HEK293 (cell line): ENCODE measurements at regions of chr1 and their contacts with region 1.

Region 1: DNA sequence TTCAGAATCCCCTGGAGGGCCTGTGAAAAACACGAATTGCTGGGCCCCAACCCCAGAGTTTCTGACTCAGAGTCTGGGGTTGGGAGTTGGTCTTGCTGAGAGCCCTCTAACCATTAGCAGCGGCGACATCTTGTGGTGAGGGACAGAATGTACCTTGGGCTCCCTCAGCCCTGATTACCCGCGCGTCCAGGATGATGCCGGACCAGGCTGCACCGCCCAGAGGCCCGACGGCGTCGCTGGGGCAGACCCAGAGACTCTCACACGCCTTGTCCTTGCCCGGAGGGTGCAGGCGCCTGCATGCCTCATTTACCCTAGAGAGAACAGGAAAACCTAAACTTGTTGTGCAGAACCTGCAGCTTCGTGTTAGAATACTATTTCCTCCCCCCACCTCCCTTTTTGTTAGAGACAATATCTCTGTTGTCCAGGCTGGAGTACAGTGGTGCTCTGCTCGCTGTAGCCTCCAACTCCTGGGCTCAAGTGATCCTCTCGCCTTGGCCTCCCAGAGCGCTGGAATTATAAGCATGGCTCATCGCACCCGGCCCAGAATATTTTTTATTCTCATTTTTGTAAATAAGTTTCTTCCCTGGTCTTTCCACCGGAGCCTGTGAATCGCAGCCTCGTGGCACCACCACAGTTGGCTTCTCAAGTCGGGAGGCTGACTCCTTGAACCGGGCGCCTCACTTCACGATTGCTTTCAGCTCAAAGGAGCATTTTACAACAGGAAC is 22.2 kb upstream of the RD3 start:
- H3K4me3 ChIP-seq: no peak overlapping the region
- H3K27ac ChIP-seq: no peak overlapping the region
- H3K4me1 ChIP-seq: no peaks in the 10 kb centered on the region
- CTCF ChIP-seq: peak; percentile 77

Region 2: DNA sequence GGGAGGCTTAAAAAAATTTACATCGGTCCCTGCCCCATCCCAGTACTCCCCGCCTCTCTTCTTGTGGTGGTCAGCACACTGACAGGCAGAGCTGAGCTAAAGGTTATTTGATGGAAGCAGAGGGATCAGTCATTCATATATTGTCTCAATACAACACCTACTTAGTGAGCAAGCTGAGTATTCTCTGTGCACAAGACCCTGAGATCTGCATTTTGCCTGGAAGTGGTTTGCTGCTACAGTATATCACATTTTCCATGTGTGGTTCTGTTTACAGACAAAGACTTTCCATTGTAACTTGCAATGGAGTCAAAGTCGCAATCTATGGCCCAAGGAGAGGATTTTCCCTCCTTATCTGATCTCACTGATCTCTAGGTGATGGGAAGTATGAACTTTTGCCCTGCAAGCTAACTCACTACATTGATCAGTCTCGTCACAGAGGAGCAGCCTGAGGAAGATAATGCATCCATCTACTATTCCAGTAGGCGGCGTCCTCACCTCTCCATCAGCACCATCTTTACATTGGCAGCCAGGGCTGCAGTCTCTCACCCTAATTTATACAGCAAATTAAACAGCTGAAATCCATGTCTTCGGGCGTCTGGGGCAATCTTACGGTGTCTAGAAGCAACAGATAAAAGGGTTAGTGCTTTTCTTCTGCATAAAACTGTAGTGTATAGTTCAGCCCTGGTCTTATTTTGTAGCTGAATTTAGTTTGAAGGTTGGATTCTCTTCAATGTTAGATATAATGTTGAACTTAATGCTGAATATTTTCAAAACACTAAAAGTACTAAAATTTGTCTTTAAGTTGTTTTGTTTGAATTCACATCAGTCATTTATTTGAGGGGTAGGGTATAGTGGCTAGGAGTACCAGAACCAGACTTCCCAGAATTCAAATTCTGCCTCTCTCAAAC is 190.8 kb before region 1 on chr1:
- CTCF ChIA-PET with region 1: interaction called, 59 read pairs
- POLR2A ChIA-PET with region 1: no interaction called
- H3K4me3 ChIP-seq: no peak overlapping the region
- H3K27ac ChIP-seq: no peak overlapping the region
- H3K4me1 ChIP-seq: no peaks in the 10 kb centered on the region
- CTCF ChIP-seq: peak; percentile 82

Region 3: GRCh38 chr1:211476200-211476849 is 37.9 kb before region 1 on chr1:
- CTCF ChIA-PET with region 1: interaction called, 59 read pairs
- POLR2A ChIA-PET with region 1: no interaction called
- H3K4me3 ChIP-seq: no peak overlapping the region
- H3K27ac ChIP-seq: no peak overlapping the region
- H3K4me1 ChIP-seq: no peaks in the 10 kb centered on the region
- CTCF ChIP-seq: peak; percentile 52; the same call in 1 of the 2 replicates

Region 4: GRCh38 chr1:211495584-211495983 is 18.6 kb before region 1 on chr1:
- CTCF ChIA-PET with region 1: interaction called, 31 read pairs
- POLR2A ChIA-PET with region 1: no interaction called
- H3K4me3 ChIP-seq: no peak overlapping the region
- H3K27ac ChIP-seq: no peak overlapping the region
- H3K4me1 ChIP-seq: no peaks in the 10 kb centered on the region
- CTCF ChIP-seq: no peak

Region 5: DNA sequence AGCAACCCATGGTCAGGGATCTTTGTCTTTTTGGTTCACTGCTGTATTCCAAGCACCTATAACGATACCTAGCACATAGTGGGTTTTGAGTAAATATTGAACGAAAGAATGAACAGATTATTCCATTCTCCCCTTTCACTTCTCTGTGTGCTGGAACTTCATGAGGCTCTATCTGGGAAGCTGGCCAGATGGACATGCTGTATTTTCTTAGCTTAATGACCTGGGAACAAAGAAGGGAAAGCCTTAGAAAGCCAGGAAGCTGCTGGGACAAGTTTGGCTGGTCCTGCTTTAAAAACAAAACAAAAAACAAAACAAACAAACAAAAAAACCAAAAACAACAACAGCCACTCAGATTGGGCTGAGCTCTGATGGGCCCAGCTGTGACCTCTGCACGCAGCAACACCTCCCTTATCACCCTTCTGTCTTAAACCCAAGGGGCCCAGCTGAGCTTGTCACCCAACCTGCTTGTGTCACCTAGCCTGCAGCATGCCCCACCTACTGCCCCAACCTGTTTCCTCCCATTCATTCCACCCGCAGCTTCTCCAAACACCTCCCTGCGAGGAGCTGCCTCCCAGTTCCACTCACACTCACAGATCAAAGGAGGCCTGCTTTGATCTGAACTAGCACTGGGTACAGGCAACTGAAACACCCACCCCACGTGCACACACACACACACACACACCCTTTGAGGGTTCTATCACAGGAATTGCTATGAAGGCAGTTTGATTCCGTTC is 27.7 kb after region 1 on chr1:
- CTCF ChIA-PET with region 1: interaction called, 14 read pairs
- POLR2A ChIA-PET with region 1: no interaction called
- H3K4me3 ChIP-seq: no peak overlapping the region
- H3K27ac ChIP-seq: no peak overlapping the region
- H3K4me1 ChIP-seq: no peaks in the 10 kb centered on the region
- CTCF ChIP-seq: no peak